AG04450 (cell line): ENCODE measurements at regions of chr2 and their contacts with region 1.

Region 1: GRCh38 chr2:101380376-101380775 is 6.9 kb downstream of the CREG2 start:
- DNase-seq: peak; percentile 15
- H3K4me3 ChIP-seq: no peak overlapping the region
- H3K27ac ChIP-seq: no peak overlapping the region
- H3K27me3 ChIP-seq: peaks cover 11% of the 10 kb centered on the region
- CTCF ChIP-seq: no peak

Region 2: DNA sequence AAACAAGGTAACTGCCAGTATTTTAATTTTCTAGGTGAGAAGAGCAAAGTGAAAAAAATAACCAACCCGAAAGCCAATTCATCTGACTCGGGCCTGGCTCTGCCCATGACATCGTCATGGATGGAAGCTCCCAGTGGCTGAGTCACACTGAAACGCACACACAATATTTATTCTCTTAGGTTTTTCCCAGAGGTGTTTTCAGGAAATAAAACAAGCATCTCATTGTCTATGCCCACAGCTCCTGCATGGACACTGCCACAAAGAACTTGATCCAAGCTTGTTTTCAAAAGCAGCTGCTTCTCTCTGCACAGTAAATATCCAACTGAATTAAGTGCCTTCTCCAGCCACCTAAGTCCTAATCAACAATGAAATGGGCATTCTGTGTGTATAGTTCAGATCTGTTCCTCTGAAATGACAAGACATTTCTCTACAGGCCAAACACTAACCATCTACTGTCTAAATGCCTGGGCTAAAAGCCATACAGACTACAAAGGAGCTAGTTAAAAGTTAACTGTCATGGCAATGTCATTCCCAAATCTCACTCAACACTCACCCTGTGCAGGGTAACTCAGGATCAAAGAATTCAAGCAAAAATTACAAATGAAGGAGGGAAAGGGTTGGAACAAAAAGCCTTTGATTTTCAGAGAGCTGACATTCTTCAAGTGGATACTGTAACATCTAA is 315.4 kb before region 1 on chr2:
- CTCF ChIA-PET with region 1: no interaction called
- POLR2A ChIA-PET with region 1: interaction called, 13 read pairs
- DNase-seq: no peak
- H3K4me3 ChIP-seq: no peak overlapping the region
- H3K27ac ChIP-seq: no peak overlapping the region
- H3K27me3 ChIP-seq: no peaks in the 10 kb centered on the region
- CTCF ChIP-seq: no peak

Region 3: DNA sequence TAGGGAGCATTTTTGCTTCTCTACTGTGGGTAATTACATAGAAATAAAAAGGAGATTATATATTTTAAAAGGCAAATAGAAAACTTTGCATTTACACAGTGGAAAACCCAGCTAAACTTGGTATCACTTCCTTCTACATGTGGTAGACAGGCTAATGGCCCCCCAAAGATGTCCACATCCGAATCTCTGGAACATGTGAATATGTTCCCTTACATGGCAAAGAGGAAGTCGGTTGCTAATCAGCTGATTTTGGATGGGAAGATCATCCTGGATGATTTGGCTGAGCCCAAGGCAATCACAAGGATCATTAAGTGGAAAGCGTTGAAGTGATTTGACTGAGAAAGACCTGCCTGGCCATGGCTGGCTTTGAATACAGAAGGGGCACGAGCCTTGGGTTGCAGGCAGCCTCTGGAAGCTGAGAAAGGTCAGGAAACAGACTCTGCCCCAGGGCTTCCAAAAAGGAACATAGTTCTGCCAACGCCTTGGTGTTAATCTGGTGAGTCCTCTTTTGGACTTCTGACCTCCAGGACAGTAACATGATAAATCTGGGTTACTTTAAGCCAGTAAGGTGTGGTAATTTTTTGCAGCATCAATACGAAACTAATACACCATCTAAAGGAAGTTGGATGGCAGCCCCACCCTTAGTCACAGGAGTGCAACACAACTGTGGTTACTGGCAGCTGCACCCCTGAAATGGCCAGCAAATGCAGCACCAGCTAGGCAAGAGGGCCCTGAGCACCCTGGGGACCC is 19.1 kb before region 1 on chr2:
- CTCF ChIA-PET with region 1: no interaction called
- POLR2A ChIA-PET with region 1: no interaction called
- DNase-seq: no peak
- H3K4me3 ChIP-seq: no peak overlapping the region
- H3K27ac ChIP-seq: no peak overlapping the region
- H3K27me3 ChIP-seq: peaks cover 27% of the 10 kb centered on the region
- CTCF ChIP-seq: no peak